Caco-2 (cell line): ENCODE measurements at regions of chr10 and their contacts with region 1.

Region 1: GRCh38 chr10:33330543-33331378 is 3.7 kb downstream of the NRP1 start:
- DNase-seq: peak; percentile 90 to 91
- H3K4me3 ChIP-seq: no peak overlapping the region; the same call in 1 of the 2 replicates
- H3K4me3 Mint-ChIP-seq: peak overlapping the region; percentile 84
- H3K27ac Mint-ChIP-seq: no peak overlapping the region
- H3K4me1 ChIP-seq: peaks cover 22% of the 10 kb centered on the region
- H3K4me1 Mint-ChIP-seq: peaks cover 30% of the 10 kb centered on the region
- H3K27me3 ChIP-seq: no peaks in the 10 kb centered on the region
- H3K27me3 Mint-ChIP-seq: no peaks in the 10 kb centered on the region
- CTCF ChIP-seq: peak; percentile 93 to 98

Region 2: GRCh38 chr10:33412653-33413361 is 82.0 kb after region 1 on chr10:
- CTCF ChIA-PET with region 1: interaction called, 10 read pairs
- POLR2A ChIA-PET with region 1: no interaction called
- intact Hi-C with region 1: loop called (anchors 2 kb)
- DNase-seq: peak in 1 of 2 experiments; percentile 20
- H3K4me3 ChIP-seq: no peak overlapping the region
- H3K4me3 Mint-ChIP-seq: peak overlapping the region; percentile 9
- H3K27ac Mint-ChIP-seq: peak overlapping the region; percentile 40
- H3K4me1 ChIP-seq: peaks cover 12% of the 10 kb centered on the region
- H3K4me1 Mint-ChIP-seq: peaks cover 13% of the 10 kb centered on the region
- H3K27me3 ChIP-seq: no peaks in the 10 kb centered on the region
- H3K27me3 Mint-ChIP-seq: no peaks in the 10 kb centered on the region
- CTCF ChIP-seq: no peak

Region 3: DNA sequence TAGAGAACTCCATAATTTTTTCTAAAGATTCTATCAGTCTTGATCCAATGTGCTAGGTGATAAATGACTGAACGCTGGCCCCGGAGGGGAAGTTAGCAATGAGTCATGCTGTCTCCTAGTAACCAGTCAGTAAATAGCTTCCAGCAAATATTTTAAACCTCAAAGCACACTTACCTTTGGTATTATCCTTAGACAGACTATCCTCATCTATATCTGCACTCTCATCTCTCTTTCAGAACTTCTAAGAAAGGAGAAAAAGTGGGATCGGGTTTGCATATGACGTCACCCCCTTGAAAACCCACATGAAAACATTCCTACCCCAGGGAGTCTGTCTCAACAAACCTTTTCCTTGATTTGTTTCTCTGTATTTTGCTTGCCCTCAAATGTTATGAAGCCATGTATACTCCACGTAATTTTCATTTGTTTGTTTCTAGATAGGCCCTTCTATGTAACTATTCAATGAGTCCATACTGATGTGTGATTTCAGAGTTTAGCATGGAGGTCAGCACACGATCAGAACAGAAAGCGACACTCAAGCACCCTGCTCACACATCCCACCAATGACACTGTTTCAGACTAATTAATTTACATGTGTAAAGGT is 178.6 kb after region 1 on chr10:
- CTCF ChIA-PET with region 1: no interaction called
- POLR2A ChIA-PET with region 1: no interaction called
- intact Hi-C with region 1: loop called (anchors 5 kb)
- DNase-seq: peak; percentile 91 to 92
- H3K4me3 ChIP-seq: no peak overlapping the region
- H3K4me3 Mint-ChIP-seq: peak overlapping the region; percentile 64
- H3K27ac Mint-ChIP-seq: peak overlapping the region; percentile 90
- H3K4me1 ChIP-seq: peaks cover 38% of the 10 kb centered on the region
- H3K4me1 Mint-ChIP-seq: peaks cover 22% of the 10 kb centered on the region
- H3K27me3 ChIP-seq: no peaks in the 10 kb centered on the region
- H3K27me3 Mint-ChIP-seq: no peaks in the 10 kb centered on the region
- CTCF ChIP-seq: no peak

Region 4: GRCh38 chr10:33643042-33643441 is 312.3 kb after region 1 on chr10:
- CTCF ChIA-PET with region 1: no interaction called
- POLR2A ChIA-PET with region 1: no interaction called
- intact Hi-C with region 1: loop called (anchors 1 kb)
- DNase-seq: no peak
- H3K4me3 ChIP-seq: no peak overlapping the region
- H3K4me3 Mint-ChIP-seq: no peak overlapping the region
- H3K27ac Mint-ChIP-seq: no peak overlapping the region
- H3K4me1 ChIP-seq: no peaks in the 10 kb centered on the region
- H3K4me1 Mint-ChIP-seq: peaks cover 6% of the 10 kb centered on the region
- H3K27me3 ChIP-seq: no peaks in the 10 kb centered on the region
- H3K27me3 Mint-ChIP-seq: no peaks in the 10 kb centered on the region
- CTCF ChIP-seq: no peak

Region 5: DNA sequence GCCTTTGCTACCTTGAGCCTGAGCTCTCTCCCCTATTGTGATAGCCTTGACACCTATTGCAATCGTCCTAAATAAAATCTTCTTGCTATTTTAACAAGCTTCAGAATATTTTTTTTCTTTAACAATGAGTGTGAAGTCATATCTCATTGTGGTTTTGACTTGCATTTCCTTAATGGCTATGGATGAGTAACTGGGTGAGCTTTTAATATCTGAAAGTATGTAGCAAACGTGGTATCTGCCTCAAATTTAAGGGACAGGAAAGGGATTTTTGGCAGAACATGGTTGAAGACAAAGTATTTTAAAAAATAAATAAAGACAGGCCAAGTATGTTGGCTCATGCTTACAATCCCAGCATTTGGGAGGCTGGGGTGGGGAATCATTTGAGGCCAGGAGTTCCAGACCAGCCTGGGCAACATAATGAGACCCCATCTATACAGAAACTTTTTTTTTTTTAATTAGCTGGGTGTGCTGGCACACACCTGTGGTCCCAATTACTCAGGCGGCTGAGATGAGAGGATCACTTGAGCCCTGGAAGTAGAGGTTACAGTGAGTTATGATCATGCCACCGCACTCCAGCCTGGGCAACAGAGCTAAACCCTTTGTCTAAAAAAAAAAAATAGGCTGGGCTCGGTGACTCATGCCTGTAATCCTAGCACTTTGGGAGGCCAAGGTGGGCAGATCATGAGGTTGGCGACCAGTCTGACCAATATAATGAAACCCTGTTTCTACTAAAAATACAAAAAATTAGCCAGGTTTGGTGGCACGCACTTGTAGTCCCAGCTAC is 323.0 kb after region 1 on chr10:
- CTCF ChIA-PET with region 1: no interaction called
- POLR2A ChIA-PET with region 1: no interaction called
- intact Hi-C with region 1: no loop called
- DNase-seq: no peak
- H3K4me3 ChIP-seq: no peak overlapping the region
- H3K4me3 Mint-ChIP-seq: no peak overlapping the region
- H3K27ac Mint-ChIP-seq: no peak overlapping the region
- H3K4me1 ChIP-seq: no peaks in the 10 kb centered on the region
- H3K4me1 Mint-ChIP-seq: no peaks in the 10 kb centered on the region
- H3K27me3 ChIP-seq: no peaks in the 10 kb centered on the region
- H3K27me3 Mint-ChIP-seq: no peaks in the 10 kb centered on the region
- CTCF ChIP-seq: no peak

Region 6: DNA sequence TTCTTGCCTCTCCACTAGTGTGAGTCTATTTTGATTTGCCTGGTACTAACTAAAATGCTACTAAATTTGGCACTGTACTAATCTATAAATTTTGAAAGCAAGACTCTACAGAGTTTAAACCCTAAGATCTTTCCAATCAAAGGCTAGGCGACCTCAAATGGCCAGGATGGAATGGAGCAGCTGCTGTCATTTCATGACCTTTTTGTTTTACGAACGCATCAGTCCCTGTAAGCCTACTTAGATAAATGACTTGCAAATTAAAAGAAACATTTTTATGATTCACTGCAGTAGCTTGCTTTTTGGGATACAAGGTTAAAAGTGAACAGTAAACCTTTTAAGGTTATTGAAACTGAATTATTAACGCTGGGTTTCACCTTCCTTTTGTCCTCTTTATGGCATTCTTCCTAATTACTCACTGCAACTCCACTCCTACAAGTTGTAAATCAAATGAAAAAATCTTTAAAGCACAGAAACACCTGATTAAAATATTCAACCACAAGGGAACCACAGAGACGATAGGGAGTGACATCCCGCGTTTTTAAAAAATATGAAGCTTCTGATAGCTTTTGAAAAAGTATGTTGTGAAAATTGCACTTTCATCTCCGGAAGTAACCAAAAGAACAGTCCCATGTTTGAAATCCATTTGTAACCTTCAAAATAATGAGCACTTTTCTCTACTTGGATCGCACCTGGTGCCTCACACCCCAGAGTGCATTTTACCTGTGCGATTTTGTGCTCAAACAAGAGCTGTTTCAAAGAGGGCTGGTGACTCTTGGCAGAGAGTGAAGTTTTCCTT is 889.2 kb after region 1 on chr10:
- CTCF ChIA-PET with region 1: no interaction called
- POLR2A ChIA-PET with region 1: no interaction called
- intact Hi-C with region 1: loop called (anchors 5 kb)
- DNase-seq: no peak
- H3K4me3 ChIP-seq: no peak overlapping the region
- H3K4me3 Mint-ChIP-seq: no peak overlapping the region
- H3K27ac Mint-ChIP-seq: no peak overlapping the region
- H3K4me1 ChIP-seq: peaks cover 41% of the 10 kb centered on the region
- H3K4me1 Mint-ChIP-seq: peaks cover 50% of the 10 kb centered on the region
- H3K27me3 ChIP-seq: no peaks in the 10 kb centered on the region
- H3K27me3 Mint-ChIP-seq: no peaks in the 10 kb centered on the region
- CTCF ChIP-seq: no peak

Region 7: GRCh38 chr10:34397324-34397723 is 1066.6 kb after region 1 on chr10:
- CTCF ChIA-PET with region 1: no interaction called
- POLR2A ChIA-PET with region 1: no interaction called
- intact Hi-C with region 1: loop called (anchors 10 kb)
- DNase-seq: no peak
- H3K4me3 ChIP-seq: no peak overlapping the region
- H3K4me3 Mint-ChIP-seq: no peak overlapping the region
- H3K27ac Mint-ChIP-seq: no peak overlapping the region
- H3K4me1 ChIP-seq: no peaks in the 10 kb centered on the region
- H3K4me1 Mint-ChIP-seq: no peaks in the 10 kb centered on the region
- H3K27me3 ChIP-seq: no peaks in the 10 kb centered on the region
- H3K27me3 Mint-ChIP-seq: no peaks in the 10 kb centered on the region
- CTCF ChIP-seq: no peak